ENCODE measurements at regions of chr12 and their contacts with region 1.

Region 1: DNA sequence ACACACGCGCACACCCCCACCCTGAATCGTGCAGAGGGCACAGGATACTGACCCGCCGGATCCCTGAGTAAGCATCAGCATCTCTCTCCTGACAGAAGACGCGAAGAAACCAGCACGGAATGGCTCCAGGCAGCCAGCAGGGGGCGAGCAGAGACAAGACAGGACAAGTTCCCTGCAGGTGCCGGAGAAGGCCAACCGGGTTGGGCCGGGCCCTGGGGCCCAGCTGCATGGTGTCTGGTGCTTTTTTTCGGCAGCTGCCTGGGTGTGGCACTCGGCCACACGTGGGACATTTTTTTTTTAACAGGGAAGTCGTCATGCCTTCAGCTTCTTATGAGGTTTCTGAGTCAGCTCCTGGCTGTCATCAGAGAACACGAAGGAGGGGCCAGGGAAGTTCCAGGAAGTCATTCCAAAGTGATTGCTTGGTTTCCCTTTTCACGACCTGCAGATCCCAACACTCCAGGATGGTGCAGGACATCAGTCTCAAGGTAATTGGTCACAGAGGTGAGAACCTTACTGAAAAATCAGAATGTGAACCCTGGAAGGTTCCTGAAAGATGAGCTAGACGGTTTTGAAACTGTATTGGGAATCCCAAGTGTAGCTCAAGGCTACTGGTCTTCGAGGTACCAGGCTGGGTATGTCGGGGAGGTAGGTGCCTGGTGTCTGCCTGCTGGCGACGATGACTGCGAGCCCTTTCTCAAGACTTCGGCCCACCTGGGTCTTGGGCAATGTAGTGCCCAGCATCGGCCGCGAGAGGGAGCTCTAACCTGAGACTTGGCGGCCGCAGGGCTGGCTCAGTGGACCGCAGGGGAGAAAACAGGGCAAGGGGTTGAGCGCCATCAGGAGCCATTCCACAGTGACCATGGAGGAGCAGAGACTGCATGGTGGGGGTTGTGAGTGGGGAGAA is 190.8 kb upstream of the PRMT8 start:
- DNase-seq: peak; percentile 76
- H3K4me3 ChIP-seq: peak overlapping the region; percentile 46
- H3K27ac ChIP-seq: peak overlapping the region; percentile 93
- H3K27me3 ChIP-seq: no peaks in the 10 kb centered on the region
- CTCF ChIP-seq: peak; percentile 98

Region 2: GRCh38 chr12:2877047-2877952 is 422.9 kb before region 1 on chr12 and contains the starts of genes FOXM1 and RHNO1:
- CTCF ChIA-PET with region 1: no interaction called
- POLR2A ChIA-PET with region 1: no interaction called
- DNase-seq: peak; percentile 66
- H3K4me3 ChIP-seq: peak within 1 kb of the TSS; percentile 82
- H3K27ac ChIP-seq: peak within 1 kb of the TSS; percentile 84
- H3K27me3 ChIP-seq: no peaks in the 10 kb centered on the region
- CTCF ChIP-seq: 0 out of 2 replicates have a peak, but pooled peaks have one; percentile 11
- polyA plus RNA-seq, gene FOXM1: 10.8 and 11.5 TPM in 2 replicates
- polyA plus RNA-seq, gene RHNO1: 42.0 and 43.4 TPM in 2 replicates

Region 3: DNA sequence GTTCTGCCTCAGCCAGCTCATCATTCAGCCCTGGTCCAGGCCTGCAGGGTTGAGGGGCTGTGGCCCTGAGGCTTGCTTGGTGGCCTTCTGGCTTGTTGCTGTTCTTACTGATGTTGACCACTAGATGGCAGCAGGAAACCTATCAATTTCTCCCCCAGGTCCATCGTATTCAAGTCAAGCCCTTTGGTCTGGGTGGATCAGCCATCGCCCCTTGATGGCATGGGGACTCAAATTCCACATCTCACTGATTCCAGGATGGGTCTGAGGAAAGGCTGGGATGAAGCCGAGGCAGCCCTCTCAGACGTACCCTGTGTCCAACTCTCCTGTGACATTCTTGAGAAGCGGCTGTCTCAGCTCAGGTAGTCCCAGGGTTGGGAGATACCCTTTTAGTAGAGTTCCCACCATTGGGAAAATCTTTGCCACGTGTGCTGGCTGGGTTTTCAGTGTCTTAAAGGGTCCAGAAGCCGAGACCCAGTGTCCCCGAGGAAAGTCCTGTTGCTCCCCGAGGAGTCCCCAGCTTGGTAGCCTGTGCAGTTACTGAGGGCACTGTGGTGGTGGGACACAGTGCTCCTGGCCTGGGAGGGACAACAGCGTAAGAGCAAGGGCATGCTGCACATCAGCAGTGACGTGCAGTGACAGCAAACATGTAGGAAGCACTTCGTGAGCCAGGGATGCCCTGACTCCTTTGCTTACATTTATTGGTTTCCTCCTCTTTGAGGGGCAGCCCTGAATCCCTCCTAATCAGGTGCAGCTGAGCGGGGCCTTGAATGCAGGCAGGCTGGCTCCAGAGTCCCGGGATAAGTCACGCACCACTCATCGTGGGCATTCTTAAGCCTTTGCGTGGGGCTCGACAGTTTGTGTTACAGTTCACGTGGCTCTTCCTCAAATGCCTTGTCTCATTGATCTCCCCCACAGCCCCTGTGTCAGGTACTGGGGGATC is 164.4 kb before region 1 on chr12:
- CTCF ChIA-PET with region 1: interaction called, 12 read pairs
- POLR2A ChIA-PET with region 1: no interaction called
- DNase-seq: peak; percentile 66
- H3K4me3 ChIP-seq: no peak overlapping the region
- H3K27ac ChIP-seq: no peak overlapping the region
- H3K27me3 ChIP-seq: no peaks in the 10 kb centered on the region
- CTCF ChIP-seq: peak; percentile 78

Region 4: DNA sequence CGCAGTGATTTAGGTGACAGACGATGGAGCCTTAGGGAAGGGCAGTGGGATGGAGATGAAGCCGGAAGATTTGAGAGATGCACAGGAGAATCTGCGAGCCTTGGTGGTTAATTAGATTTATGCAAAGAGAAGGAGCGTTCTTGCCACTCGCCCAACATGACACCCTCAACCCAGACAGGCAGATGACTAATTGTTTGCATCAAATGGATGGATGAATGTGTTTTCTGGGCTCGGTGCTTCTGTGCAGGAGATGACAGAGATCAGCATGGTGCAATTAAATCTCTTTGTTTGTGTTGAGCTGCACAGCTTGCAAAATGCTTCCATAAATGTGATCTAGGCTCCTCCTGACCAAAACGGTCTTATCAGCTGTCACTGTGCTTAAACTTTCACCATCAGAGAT is 11.5 kb before region 1 on chr12:
- CTCF ChIA-PET with region 1: interaction called, 39 read pairs
- POLR2A ChIA-PET with region 1: no interaction called
- DNase-seq: no peak
- H3K4me3 ChIP-seq: no peak overlapping the region
- H3K27ac ChIP-seq: no peak overlapping the region
- H3K27me3 ChIP-seq: no peaks in the 10 kb centered on the region
- CTCF ChIP-seq: no peak

Region 5: GRCh38 chr12:3523058-3523457 is 222.9 kb after region 1 on chr12:
- CTCF ChIA-PET with region 1: interaction called, 13 read pairs
- POLR2A ChIA-PET with region 1: no interaction called
- DNase-seq: no peak
- H3K4me3 ChIP-seq: no peak overlapping the region
- H3K27ac ChIP-seq: no peak overlapping the region
- H3K27me3 ChIP-seq: peaks cover 9% of the 10 kb centered on the region
- CTCF ChIP-seq: no peak

Region 6: DNA sequence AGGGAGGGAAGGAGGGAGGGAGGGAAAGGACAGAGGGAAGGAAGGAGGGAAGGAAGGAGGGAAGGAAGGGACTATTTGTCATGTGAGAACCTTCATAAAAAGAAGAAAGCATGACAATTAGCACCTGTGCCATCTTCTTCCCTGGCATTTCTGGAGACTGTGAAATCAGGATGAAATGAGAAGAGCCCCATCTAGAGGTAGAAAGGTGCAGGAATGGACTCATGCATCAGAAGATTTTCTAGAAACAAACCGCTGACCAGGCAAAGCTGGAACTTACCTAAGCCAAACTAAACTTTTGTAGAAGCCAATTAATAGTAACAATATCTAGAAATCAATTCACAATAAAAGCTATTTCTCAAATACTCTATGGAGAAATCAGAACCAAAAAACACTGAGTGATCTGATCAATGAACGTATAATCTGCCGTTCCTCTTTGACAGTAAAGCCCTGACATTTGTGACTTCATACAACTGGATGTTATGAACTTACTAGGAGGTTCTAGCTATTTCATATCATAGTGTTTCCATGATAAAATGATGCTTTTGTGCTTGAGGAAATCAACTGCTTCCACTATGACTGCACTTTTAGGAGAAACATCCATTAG is 477.1 kb after region 1 on chr12:
- CTCF ChIA-PET with region 1: interaction called, 79 read pairs
- POLR2A ChIA-PET with region 1: no interaction called
- DNase-seq: peak; percentile 10
- H3K4me3 ChIP-seq: no peak overlapping the region
- H3K27ac ChIP-seq: no peak overlapping the region
- H3K27me3 ChIP-seq: peaks cover 5% of the 10 kb centered on the region
- CTCF ChIP-seq: peak; percentile 87

Region 7: DNA sequence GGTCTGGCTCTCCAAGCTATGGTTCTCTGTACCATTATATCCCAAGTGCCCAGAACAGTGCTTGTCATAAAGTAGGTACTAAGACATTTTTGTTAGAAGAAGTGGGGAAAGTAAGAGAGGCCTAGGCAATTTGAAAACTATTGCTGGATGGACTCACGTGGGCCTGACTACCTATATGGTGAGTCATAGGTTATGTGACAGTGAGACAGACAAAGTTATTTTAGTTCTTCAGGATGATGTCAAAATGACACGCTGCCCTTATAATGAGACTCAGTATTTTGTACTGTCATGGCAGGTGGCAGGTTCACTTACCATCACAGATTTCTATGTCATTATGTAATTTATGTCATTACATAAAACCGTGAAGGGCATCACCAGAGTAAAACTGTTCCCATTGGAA is 519.9 kb after region 1 on chr12:
- CTCF ChIA-PET with region 1: interaction called, 14 read pairs
- POLR2A ChIA-PET with region 1: no interaction called
- DNase-seq: no peak
- H3K4me3 ChIP-seq: no peak overlapping the region
- H3K27ac ChIP-seq: no peak overlapping the region
- H3K27me3 ChIP-seq: no peaks in the 10 kb centered on the region
- CTCF ChIP-seq: no peak

Region 8: DNA sequence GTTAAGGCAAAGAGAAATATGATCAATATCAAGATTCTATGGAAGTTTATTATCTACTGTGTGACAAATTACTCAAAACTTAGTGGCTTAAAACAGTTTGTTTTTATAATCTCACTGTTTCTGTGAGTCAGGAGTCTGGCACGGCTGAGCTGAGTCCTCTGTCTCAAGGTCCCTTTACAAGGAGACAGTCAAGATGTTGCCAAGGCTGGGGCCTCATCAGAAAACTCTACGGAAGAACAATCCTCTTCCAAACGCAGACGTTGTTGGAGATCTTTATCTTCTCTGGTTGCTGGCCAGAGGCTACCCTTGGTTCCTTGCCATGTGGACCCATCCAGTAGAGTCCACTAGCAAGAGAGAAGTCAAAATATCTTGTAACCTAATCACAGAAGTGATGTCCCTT is 872.8 kb after region 1 on chr12:
- CTCF ChIA-PET with region 1: no interaction called
- POLR2A ChIA-PET with region 1: no interaction called
- DNase-seq: no peak
- H3K4me3 ChIP-seq: no peak overlapping the region
- H3K27ac ChIP-seq: no peak overlapping the region
- H3K27me3 ChIP-seq: no peaks in the 10 kb centered on the region
- CTCF ChIP-seq: no peak

Region 9: DNA sequence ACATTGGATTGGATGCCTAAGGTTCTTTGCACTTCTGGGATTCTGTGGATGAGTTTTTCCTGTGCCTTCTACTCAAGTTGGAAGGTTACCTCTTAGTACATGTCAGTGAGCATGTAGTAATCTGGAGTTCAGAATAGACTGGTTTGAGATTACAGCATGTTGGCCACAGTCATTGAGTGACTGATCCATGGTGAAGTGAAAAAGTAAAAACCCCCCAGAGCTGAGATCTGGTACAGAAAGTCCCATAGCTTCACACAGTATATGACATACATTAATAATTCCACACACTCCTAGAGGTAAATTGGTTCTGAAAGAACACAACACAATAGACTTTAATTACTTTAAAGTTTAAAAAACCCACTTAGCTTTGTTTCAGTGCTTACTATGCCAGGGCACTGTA is 961.5 kb after region 1 on chr12:
- CTCF ChIA-PET with region 1: no interaction called
- POLR2A ChIA-PET with region 1: no interaction called
- DNase-seq: no peak
- H3K4me3 ChIP-seq: no peak overlapping the region
- H3K27ac ChIP-seq: no peak overlapping the region
- H3K27me3 ChIP-seq: peaks cover 26% of the 10 kb centered on the region
- CTCF ChIP-seq: no peak